HEK293 (cell line): ENCODE measurements at regions of chr1 and their contacts with region 1.

Region 1: GRCh38 chr1:5992026-5992813 is at the start of gene NPHP4:
- H3K4me3 ChIP-seq: peak within 1 kb of the TSS; percentile 77
- H3K27ac ChIP-seq: peak within 1 kb of the TSS; percentile 52; the same call in 1 of the 2 replicates
- H3K4me1 ChIP-seq: no peaks in the 10 kb centered on the region
- CTCF ChIP-seq: no peak; the same call in 1 of the 2 replicates

Region 2: GRCh38 chr1:5811419-5811818 is 180.8 kb before region 1 on chr1:
- CTCF ChIA-PET with region 1: no interaction called
- POLR2A ChIA-PET with region 1: no interaction called
- H3K4me3 ChIP-seq: no peak overlapping the region
- H3K27ac ChIP-seq: no peak overlapping the region
- H3K4me1 ChIP-seq: no peaks in the 10 kb centered on the region
- CTCF ChIP-seq: no peak

Region 3: GRCh38 chr1:5980314-5981008 is 11.8 kb before region 1 on chr1:
- CTCF ChIA-PET with region 1: interaction called, 12 read pairs
- POLR2A ChIA-PET with region 1: interaction called, 11 read pairs
- H3K4me3 ChIP-seq: no peak overlapping the region
- H3K27ac ChIP-seq: no peak overlapping the region
- H3K4me1 ChIP-seq: no peaks in the 10 kb centered on the region; the same call in 1 of the 2 replicates
- CTCF ChIP-seq: peak; percentile 58

Region 4: DNA sequence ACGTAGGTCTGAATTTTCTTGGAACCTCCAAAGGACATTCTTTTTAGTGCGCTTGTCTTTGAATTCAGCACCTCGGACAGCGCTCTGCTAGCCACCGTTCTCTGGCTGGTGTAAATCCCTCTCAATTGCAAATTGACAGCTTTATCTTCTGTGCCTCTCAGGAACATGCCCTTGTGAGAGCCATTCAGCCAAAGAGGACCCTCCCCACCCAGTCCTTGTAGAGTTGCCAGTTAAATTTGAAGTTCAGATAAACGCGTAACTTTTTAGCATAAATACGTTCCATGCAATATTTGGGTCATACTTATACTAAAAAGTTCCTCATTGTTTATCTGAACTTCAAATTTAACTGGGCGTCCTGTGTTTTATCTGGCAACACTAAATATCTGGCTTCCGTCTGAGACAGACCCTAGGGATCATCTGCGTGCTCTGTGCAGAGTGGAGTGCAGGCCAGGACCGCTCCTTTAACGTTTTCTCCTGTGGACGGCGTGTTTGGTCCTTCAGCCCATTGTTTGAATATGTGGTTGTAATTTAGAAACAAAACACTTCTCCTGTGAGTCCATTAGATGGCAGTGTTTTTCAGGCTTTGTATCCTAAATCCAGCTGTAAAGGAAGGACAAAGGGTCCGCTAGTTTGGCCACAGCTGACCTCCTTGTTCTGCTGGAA is 60.5 kb after region 1 on chr1:
- CTCF ChIA-PET with region 1: no interaction called
- POLR2A ChIA-PET with region 1: no interaction called
- H3K4me3 ChIP-seq: no peak overlapping the region
- H3K27ac ChIP-seq: no peak overlapping the region
- H3K4me1 ChIP-seq: no peaks in the 10 kb centered on the region
- CTCF ChIP-seq: no peak